ENCODE measurements at regions of chr1 and their contacts with region 1.

Region 1: DNA sequence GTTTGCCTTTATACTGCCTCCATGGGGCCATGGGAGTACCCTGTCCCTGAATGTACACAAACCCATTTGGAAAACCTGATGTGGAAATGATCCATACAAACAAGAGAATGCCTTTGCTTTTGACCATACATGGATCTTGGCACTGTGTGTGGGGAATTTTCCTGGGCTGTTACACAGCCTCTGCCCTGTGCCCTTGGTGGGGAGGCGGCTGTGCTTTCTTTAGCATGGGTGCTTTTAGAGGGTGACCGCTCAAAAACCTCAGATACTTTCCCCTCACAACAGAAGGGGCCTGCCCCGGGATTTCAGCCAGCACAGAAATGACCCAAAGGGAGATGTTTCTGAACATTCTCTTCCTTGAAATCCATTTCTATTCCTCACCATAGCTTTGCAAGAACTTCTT is 194.8 kb downstream of the LMO4 start:
- DNase-seq: peak; percentile 33 to 84
- H3K4me3 ChIP-seq: peak overlapping the region in 1 of 2 donors; percentile 2
- H3K27ac ChIP-seq: peak overlapping the region; percentile 66 to 84
- H3K4me1 ChIP-seq: peaks cover 0 to 51% (median 13%) of the 10 kb centered on the region in 4 donors
- H3K27me3 ChIP-seq: no peaks in the 10 kb centered on the region
- CTCF ChIP-seq: no peak

Region 2: DNA sequence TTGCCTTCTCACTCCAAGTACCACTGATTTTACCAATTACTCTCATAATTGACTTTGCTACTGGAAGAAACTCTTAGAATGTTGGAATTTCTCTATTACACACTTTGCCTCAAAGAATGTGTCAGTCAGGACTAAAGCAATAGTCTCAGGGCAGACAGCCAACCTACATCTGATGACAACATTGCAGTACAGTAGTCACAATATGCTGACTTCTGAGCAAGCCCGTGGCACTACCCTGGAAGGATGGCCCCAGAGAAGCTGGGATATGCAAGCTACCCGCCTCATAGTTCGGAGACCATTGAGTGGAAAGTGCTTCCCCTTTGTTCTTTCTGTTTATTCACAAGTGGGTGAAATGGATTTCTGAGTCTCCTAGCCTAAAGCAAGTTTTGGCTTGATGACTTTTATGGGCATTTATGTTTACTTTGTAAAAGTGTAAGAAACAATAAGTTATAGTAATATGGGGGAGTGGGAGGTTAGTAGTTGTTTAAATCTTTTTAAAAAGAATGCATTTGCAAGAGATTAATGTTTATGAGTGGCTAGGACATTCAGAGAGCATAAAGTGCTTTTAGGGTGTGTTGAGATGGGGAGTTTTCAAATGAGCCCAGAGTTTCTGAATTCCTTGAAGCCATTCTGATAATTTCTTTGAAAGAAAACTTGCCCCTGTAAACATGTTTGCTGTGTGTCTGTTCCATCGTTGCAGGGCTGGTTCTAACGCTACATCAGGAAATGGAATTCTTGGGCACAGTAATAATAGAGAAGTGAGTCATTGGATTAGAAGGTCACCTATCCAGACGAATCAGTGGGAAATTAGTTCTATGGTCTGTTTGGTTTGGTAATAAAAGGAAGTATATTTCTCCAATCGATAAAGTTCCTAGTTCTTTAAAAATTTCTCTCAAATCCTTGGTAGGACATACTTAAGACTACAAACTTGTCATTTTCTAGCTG is 130.9 kb before region 1 on chr1:
- intact Hi-C with region 1: no loop called
- DNase-seq: no peak
- H3K4me3 ChIP-seq: no peak overlapping the region
- H3K27ac ChIP-seq: no peak overlapping the region
- H3K4me1 ChIP-seq: peaks cover 0 to 13% (median 6%) of the 10 kb centered on the region in 4 donors
- H3K27me3 ChIP-seq: no peaks in the 10 kb centered on the region
- CTCF ChIP-seq: no peak

Region 3: DNA sequence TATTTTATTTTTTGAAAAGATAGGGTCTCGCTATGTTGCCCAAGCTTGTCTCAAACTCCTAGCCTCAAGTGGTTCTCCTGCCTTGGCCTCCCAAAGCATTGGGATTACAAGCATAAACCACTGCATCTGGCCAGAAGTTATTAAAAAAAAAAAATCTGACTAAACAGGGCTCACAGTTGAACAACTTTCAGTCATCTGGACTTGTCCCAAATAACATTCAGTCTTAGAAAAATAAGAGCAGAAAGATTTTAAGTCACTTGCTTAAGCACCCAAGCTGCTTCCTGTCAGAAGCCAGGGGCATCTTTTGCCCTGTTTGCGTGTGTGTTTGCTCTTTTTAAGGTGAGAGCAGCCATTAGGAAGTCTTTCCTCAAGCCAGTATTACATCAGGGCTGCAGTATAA is 92.0 kb after region 1 on chr1:
- intact Hi-C with region 1: loop called (anchors 5 kb)
- DNase-seq: no peak
- H3K4me3 ChIP-seq: no peak overlapping the region
- H3K27ac ChIP-seq: peak overlapping the region; percentile 54 to 76
- H3K4me1 ChIP-seq: peaks cover 0 to 41% (median 16%) of the 10 kb centered on the region in 4 donors
- H3K27me3 ChIP-seq: no peaks in the 10 kb centered on the region
- CTCF ChIP-seq: no peak

Measured in tibial artery (tissue), 4 donors.